Activated CD4-positive, alpha-beta T cell treated with anti-CD3 and anti-CD28 coated beads for 36 hours (primary cell): ENCODE measurements at regions of chr3 and their contacts with region 1.

Region 1: DNA sequence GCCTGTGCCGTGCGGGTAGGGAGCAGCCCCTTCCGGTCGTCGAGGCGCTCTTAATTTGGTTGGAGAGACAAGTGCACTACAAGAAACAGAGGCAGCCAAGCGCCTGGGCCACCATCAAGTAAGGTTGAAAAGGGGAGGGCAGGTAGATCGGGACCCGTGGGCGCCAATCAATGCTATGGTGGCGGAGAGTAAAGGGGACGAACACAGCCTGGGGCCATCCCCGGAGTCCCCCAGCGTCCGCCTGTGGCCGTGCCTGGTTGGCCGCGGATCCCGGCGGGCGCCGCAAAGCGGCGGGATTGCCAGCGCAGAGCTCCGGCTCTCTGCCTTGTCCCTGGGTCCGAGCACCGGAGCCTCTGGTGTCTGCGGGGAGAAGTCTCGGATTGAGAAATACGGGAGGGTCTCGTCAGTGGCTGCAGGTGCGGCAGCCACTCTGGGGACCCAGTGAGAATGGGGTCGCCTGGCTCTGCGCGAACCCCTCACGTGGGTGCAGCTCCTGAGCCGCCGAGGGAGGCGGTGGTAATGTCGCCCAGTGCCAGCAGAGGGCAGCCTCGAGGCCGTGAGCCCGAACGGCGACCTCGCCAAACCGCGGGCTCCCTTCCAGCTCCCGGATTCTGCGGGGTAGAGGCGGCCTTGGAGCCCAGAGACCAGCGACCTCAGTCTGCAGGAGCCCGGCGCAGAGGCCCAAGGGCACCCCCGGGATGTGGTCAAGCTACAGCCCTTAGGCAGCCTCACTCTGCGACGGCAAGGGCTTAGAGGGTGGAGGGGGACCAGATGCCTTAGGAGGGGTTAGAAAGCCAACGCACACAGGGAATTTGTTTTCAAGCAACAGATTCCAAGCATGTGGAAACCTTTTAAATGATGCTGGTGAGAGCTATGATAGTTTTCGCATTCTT is 10.8 kb downstream of the FOXL2 start:
- DNase-seq: peak; percentile 84
- ATAC-seq: peak; percentile 73
- H3K4me3 Mint-ChIP-seq: peak overlapping the region; percentile 63
- H3K27ac Mint-ChIP-seq: no peak overlapping the region
- H3K4me1 Mint-ChIP-seq: peaks cover 25% of the 10 kb centered on the region
- H3K27me3 Mint-ChIP-seq: peaks cover 61% of the 10 kb centered on the region

Region 2: GRCh38 chr3:137768361-137769321 is 1167.5 kb before region 1 on chr3:
- CTCF ChIA-PET with region 1: no interaction called
- POLR2A ChIA-PET with region 1: no interaction called
- intact Hi-C with region 1: loop called (anchors 5 kb)
- DNase-seq: peak; percentile 30
- ATAC-seq: no peak
- H3K4me3 Mint-ChIP-seq: no peak overlapping the region
- H3K27ac Mint-ChIP-seq: no peak overlapping the region
- H3K4me1 Mint-ChIP-seq: peaks cover 18% of the 10 kb centered on the region
- H3K27me3 Mint-ChIP-seq: peaks cover 71% of the 10 kb centered on the region

Region 3: DNA sequence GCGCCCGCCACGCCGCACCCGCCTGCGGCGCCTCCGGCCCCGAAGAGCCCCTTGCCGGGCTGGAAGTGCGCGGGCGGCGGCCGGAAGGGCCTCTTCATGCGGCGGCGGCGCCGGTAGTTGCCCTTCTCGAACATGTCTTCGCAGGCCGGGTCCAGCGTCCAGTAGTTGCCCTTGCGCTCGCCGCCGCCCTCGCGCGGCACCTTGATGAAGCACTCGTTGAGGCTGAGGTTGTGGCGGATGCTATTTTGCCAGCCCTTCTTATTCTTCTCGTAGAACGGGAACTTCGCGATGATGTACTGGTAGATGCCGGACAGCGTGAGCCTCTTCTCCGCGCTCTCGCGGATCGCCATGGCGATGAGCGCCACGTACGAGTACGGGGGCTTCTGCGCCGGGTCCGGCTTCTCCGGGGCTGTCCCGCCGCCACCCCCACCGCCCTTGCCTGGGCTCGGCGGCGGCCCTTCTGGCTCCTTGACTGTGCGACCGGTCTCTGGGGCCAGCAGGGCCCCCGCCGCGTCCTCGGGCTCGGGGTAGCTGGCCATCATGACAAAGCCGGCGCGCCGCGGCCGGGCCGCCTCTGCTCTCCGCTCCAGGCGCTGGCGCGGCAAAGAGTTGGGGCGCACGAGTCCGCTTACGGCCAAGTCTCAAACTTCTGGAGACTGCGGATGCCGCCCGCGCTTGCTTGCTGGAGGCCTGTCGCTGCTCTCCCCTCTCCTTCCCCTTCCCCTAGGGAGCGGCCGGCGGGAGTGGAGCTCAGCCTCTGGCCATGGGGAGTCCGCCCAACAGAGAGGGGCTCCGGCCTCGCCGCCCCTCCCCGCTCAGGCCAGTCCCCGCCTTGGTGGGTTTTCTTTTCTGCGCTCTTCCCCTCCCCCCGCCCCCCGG is 10.3 kb after region 1 on chr3:
- CTCF ChIA-PET with region 1: interaction called, 27 read pairs
- POLR2A ChIA-PET with region 1: no interaction called
- intact Hi-C with region 1: loop called (anchors 1 to 2 kb)
- DNase-seq: peak; percentile 58
- ATAC-seq: no peak
- H3K4me3 Mint-ChIP-seq: peak overlapping the region; percentile 45
- H3K27ac Mint-ChIP-seq: no peak overlapping the region
- H3K4me1 Mint-ChIP-seq: peaks cover 33% of the 10 kb centered on the region
- H3K27me3 Mint-ChIP-seq: peaks cover 71% of the 10 kb centered on the region

Region 4: DNA sequence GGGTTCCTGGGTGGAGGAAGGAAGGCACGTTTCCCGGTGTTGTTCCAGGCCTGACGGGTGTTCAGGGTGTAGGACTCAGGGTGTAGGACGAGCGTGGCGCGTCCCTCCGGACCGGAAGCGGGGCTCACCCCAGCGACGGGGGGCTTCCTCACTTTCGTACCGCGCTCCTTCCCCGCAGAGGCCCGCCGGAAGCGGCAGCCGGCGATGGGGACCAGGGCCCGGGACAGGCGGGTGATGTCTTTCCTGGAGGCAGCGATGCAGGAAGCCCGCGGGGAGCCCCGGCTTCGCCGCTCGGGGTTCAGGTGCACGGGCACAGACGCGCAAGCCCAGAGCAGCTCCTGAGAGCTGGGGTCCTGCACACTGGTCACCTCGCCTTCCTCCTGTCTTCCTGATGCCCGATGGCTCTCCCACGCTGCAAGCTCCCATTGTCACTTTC is 24.3 kb after region 1 on chr3:
- CTCF ChIA-PET with region 1: interaction called, 11 read pairs
- POLR2A ChIA-PET with region 1: no interaction called
- intact Hi-C with region 1: no loop called
- DNase-seq: peak; percentile 10
- ATAC-seq: no peak
- H3K4me3 Mint-ChIP-seq: no peak overlapping the region
- H3K27ac Mint-ChIP-seq: no peak overlapping the region
- H3K4me1 Mint-ChIP-seq: peaks cover 12% of the 10 kb centered on the region
- H3K27me3 Mint-ChIP-seq: peaks cover 49% of the 10 kb centered on the region

Region 5: DNA sequence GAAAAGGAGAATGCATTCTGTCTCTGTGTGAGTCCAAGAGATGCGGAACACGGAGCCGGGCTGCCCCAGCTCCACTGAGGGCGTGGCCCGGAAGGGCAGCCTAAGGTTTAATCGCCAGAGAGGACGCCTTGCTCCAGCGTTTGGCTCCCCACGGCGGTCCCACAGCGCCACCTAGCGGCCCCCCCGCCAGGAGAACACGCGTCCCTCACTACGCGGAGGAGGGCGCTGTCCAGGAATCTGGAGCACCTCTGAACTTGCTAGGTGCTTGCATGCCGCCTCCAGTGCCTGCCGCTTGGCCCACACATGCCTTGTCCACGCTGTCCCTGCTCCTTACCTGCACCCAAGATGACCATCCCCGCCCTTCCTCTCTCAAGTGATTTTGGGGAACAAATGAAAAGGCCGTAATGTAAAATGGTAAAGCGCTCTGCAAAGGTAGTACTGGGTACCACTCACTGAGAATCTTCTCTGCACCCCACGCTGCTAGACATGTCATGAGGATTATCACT is 393.3 kb after region 1 on chr3:
- CTCF ChIA-PET with region 1: interaction called, 7 read pairs
- POLR2A ChIA-PET with region 1: no interaction called
- intact Hi-C with region 1: loop called (anchors 1 to 2 kb)
- DNase-seq: peak; percentile 95
- ATAC-seq: peak; percentile 98
- H3K4me3 Mint-ChIP-seq: peak overlapping the region; percentile 25
- H3K27ac Mint-ChIP-seq: no peak overlapping the region
- H3K4me1 Mint-ChIP-seq: peaks cover 7% of the 10 kb centered on the region
- H3K27me3 Mint-ChIP-seq: peaks cover 19% of the 10 kb centered on the region